AG04449 (cell line): ENCODE measurements at regions of chr5 and their contacts with region 1.

Region 1: GRCh38 chr5:91419571-91420537 is 36.7 kb upstream of the ARRDC3 start:
- DNase-seq: no peak
- H3K4me3 ChIP-seq: no peak overlapping the region
- CTCF ChIP-seq: peak; percentile 13

Region 2: GRCh38 chr5:90866333-90866732 is 553.5 kb before region 1 on chr5:
- CTCF ChIA-PET with region 1: interaction called, 100 read pairs
- POLR2A ChIA-PET with region 1: no interaction called
- DNase-seq: no peak
- H3K4me3 ChIP-seq: no peak overlapping the region
- CTCF ChIP-seq: no peak

Region 3: DNA sequence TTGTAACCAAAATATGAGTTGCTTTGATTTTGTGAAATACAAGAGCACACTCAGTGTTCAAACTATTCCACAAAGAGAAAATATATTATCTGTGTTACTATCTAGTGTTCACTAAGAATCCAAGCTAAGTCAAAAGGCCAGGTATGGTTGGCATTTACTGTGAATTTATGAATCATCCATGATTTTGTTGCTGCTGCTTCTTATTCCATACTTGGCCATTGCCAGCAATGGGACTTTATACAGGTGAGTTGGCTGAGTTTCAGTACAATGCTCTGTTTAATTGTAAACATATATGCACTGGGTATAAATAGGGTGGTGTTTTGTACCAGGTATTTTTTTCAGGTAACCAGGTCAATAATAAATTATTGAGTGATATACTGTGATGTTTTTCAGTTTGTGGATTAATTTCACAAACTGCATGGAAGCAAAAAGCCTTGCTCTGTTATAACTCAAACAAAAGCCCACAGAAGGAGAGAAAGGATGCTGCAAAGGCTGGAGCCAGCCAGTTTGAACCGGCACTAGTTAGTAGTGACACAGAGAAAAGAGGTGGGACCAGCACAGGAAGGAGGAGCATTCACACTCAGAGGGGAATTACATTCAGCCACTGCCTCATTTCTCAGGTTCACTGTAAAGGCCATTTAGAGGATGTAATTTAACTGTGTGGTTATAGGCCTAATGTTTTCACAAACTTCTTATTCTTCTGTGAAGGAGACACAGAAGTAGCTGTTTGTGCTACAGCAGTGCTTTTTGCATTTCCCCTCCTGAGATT is 479.4 kb before region 1 on chr5:
- CTCF ChIA-PET with region 1: interaction called, 146 read pairs
- POLR2A ChIA-PET with region 1: no interaction called
- DNase-seq: no peak
- H3K4me3 ChIP-seq: no peak overlapping the region
- CTCF ChIP-seq: no peak

Region 4: DNA sequence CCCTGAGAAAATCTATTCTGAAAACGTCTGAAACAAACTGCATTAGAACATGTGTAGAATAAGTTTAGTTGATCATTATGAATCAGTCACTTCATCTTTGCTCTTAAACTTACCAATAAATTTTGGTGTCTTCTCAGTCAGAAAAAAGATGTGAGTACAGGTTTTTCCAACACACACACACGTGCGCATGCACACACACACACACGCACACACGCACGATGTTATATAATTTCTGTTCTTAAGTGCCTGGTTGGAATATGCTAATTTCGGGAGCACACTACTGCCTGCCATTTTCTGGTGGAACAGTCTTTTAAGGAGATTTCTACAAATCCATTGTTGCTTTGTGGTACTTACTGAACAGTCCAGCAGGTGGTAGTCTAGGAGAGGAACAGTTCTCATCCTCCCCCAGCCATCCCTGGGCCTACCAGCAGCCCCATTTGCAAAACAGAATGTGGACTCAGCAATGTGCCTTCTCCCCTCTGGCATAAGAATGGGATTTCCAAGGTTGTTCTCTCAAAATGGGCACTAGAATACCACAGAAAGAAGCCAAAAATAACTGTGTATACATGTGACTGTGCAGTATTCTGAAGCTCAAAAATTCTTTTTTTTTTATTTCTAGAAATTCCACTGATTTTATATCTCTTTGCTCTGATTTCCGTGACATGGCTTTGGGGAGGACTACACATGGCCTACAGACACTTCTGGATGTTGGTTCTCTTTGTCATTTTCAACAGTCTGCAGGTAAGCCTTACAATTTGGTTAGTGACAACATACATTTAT is 318.1 kb before region 1 on chr5:
- CTCF ChIA-PET with region 1: interaction called, 34 read pairs
- POLR2A ChIA-PET with region 1: no interaction called
- DNase-seq: no peak
- H3K4me3 ChIP-seq: no peak overlapping the region
- CTCF ChIP-seq: peak; percentile 73

Region 5: DNA sequence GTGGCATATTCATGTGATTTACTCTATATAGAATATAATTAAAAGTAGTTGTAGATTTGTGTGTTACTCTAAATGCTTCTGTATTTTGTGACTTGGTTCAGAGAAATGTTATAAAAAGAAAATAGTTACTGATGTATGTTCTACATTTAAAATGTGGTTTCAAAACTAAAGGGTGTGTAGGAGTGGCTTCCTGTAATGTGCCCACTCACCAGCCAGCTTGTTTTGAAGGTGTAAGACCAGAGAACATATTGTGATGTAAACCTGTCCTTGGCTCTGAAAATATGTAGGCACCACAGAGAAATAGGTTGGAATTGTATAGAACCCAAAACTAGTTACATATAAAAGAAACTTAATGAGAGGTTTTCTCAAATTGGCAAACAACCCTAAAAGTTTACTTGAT is 14.5 kb after region 1 on chr5:
- CTCF ChIA-PET with region 1: interaction called, 26 read pairs
- POLR2A ChIA-PET with region 1: no interaction called
- DNase-seq: no peak
- H3K4me3 ChIP-seq: no peak overlapping the region
- CTCF ChIP-seq: no peak